Gastrocnemius medialis (tissue), 4 donors: ENCODE measurements at regions of chr6 and their contacts with region 1.

Region 1: GRCh38 chr6:158220786-158221442 is 52.8 kb downstream of the GTF2H5 start:
- DNase-seq: peak; percentile 62 to 68
- ATAC-seq: peak; percentile 94 to 95
- H3K4me3 ChIP-seq: no peak overlapping the region
- H3K27ac ChIP-seq: no peak overlapping the region
- H3K4me1 ChIP-seq: no peaks in the 10 kb centered on the region
- H3K27me3 ChIP-seq: no peaks in the 10 kb centered on the region
- CTCF ChIP-seq: peak; percentile 82 to 99 (median 87)
- POLR2A ChIP-seq: no peak

Region 2: GRCh38 chr6:158185729-158186456 is 35.0 kb before region 1 on chr6:
- in situ Hi-C with region 1: no loop called
- intact Hi-C with region 1: no loop called
- DNase-seq: no peak
- ATAC-seq: no peak
- H3K4me3 ChIP-seq: no peak overlapping the region
- H3K27ac ChIP-seq: no peak overlapping the region
- H3K4me1 ChIP-seq: no peaks in the 10 kb centered on the region
- H3K27me3 ChIP-seq: no peaks in the 10 kb centered on the region
- CTCF ChIP-seq: no peak
- POLR2A ChIP-seq: no peak

Region 3: DNA sequence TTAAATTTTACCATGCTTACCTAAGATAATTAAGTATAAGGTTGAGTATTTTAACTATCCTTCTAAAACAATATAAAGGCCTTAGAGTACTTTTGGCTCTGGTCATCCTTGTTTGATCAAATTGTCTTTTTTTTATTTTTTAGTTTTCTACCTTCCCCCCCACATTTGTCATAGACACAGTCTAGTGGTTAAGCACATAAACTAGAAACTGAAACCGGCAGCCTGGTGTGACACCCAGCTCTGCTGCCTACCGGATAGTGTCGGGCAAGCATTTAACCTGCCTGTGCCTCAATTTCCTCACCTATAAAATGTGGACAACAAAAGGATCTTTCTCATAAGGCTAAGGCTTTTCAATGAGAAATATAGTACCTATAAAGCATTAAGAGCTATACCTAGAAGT is 69.7 kb after region 1 on chr6:
- in situ Hi-C with region 1: no loop called
- intact Hi-C with region 1: no loop called
- DNase-seq: no peak
- ATAC-seq: no peak
- H3K4me3 ChIP-seq: peak overlapping the region in 1 of 4 donors; percentile 10
- H3K27ac ChIP-seq: no peak overlapping the region
- H3K4me1 ChIP-seq: peaks cover 18 to 36% of the 10 kb centered on the region in 2 donors
- H3K27me3 ChIP-seq: no peaks in the 10 kb centered on the region
- CTCF ChIP-seq: no peak
- POLR2A ChIP-seq: no peak

Region 4: DNA sequence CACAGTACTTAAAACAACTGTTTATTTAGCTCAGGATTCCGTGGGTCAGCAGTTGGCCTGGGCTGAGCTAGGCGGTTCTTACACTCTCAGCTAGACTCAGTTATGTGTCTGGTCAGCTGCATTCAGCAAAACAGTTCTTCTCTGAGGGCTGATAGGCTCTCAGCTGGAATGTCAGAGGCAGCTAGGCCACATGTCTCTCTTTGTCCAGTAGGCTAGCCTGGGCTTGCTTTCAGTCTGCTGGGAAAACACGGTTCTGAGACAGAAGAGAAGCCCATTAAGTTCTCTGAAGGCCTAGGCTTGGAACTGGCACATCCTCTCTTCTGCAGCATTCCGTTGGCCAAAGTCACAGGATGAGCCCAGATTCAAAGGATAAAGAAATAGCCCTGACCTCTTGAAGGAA is 156.9 kb after region 1 on chr6:
- in situ Hi-C with region 1: no loop called
- intact Hi-C with region 1: no loop called
- DNase-seq: no peak
- ATAC-seq: peak in 1 of 2 donors; percentile 9
- H3K4me3 ChIP-seq: no peak overlapping the region
- H3K27ac ChIP-seq: peak overlapping the region; percentile 67 to 76 (median 70)
- H3K4me1 ChIP-seq: peaks cover 37 to 51% of the 10 kb centered on the region in 2 donors
- H3K27me3 ChIP-seq: no peaks in the 10 kb centered on the region
- CTCF ChIP-seq: no peak
- POLR2A ChIP-seq: no peak

Region 5: GRCh38 chr6:158518191-158519127 is 297.5 kb after region 1 on chr6:
- in situ Hi-C with region 1: loop called in 3 of 4 experiments (anchors 25 kb)
- intact Hi-C with region 1: loop called (anchors 1 kb)
- DNase-seq: no peak
- ATAC-seq: peak; percentile 29 to 77
- H3K4me3 ChIP-seq: peak overlapping the region in 3 of 4 donors; percentile 6 to 19 (median 6)
- H3K27ac ChIP-seq: no peak overlapping the region
- H3K4me1 ChIP-seq: no peaks in the 10 kb centered on the region
- H3K27me3 ChIP-seq: peaks cover 17 to 22% (median 20%) of the 10 kb centered on the region in 3 donors
- CTCF ChIP-seq: peak in 3 of 5 experiments; percentile 43 to 52 (median 50)
- POLR2A ChIP-seq: no peak

Region 6: GRCh38 chr6:158605266-158605878 is 384.5 kb after region 1 on chr6:
- in situ Hi-C with region 1: loop called in 2 of 4 experiments (anchors 10 kb)
- intact Hi-C with region 1: no loop called
- DNase-seq: no peak
- ATAC-seq: peak; percentile 58 to 75
- H3K4me3 ChIP-seq: no peak overlapping the region
- H3K27ac ChIP-seq: no peak overlapping the region
- H3K4me1 ChIP-seq: no peaks in the 10 kb centered on the region
- H3K27me3 ChIP-seq: no peaks in the 10 kb centered on the region
- CTCF ChIP-seq: peak; percentile 34 to 62 (median 55)
- POLR2A ChIP-seq: no peak

Region 7: GRCh38 chr6:158697811-158698210 is 476.9 kb after region 1 on chr6:
- in situ Hi-C with region 1: loop called in 3 of 4 experiments (anchors 10 kb)
- intact Hi-C with region 1: loop called (anchors 10 kb)
- DNase-seq: no peak
- ATAC-seq: no peak
- H3K4me3 ChIP-seq: no peak overlapping the region
- H3K27ac ChIP-seq: no peak overlapping the region
- H3K4me1 ChIP-seq: no peaks in the 10 kb centered on the region
- H3K27me3 ChIP-seq: no peaks in the 10 kb centered on the region
- CTCF ChIP-seq: no peak
- POLR2A ChIP-seq: no peak

Region 8: GRCh38 chr6:159777240-159777904 is 1556.5 kb after region 1 on chr6:
- in situ Hi-C with region 1: no loop called
- intact Hi-C with region 1: no loop called
- DNase-seq: no peak
- ATAC-seq: no peak
- H3K4me3 ChIP-seq: no peak overlapping the region
- H3K27ac ChIP-seq: no peak overlapping the region
- H3K4me1 ChIP-seq: no peaks in the 10 kb centered on the region
- H3K27me3 ChIP-seq: no peaks in the 10 kb centered on the region
- CTCF ChIP-seq: no peak
- POLR2A ChIP-seq: no peak